Activated CD4-positive, alpha-beta memory T cell treated with anti-CD3 and anti-CD28 coated beads, Interleukin-2, amount 10 ng/mL, durations not matched to agents 7 days and 5 days (primary cell): ENCODE measurements at regions of chr11 and their contacts with region 1.

Region 1: GRCh38 chr11:65927904-65928397 is 8.7 kb downstream of the DRAP1 start:
- DNase-seq: peak; percentile 87
- H3K4me3 Mint-ChIP-seq: peak overlapping the region; percentile 69
- H3K27ac Mint-ChIP-seq: peak overlapping the region; percentile 95
- H3K4me1 Mint-ChIP-seq: peaks cover 48% of the 10 kb centered on the region
- H3K27me3 Mint-ChIP-seq: no peaks in the 10 kb centered on the region

Region 2: DNA sequence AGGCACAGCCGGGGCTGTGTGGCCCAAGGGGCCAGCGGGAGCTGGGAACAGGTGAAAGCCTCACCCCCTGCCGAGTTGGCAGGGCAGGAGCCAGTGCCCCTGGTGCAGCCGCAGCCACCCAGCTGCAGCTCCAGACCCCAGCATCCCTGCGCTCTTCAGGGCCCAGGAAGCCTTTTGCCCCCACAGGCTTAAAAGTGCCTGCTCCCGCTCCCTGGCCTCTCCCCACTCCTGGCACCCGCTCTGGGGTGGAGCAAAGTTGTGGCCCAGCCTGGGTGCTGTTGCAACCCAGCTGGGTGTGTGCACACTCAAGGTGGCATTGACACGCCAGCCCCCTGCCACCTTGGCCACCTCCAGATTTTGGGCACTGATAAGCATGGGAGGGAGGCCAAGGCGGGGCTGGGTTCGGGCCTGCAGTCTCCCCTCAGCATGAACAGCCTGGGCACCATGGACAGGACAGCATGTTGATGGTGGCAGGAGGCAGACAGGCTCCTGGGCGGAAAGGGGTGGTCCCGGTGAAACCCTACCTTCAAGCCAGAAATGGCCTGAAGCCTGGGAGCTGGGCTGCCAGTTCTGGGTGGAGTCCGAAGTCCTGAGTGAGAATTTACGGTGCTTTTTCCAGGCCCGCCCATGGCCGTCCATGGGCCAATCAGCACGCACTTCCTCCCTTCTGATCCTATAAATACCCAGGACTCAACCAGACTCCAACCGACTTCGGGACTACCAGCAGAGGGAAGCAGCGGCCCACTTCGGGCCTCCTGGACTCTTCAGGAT is 183.8 kb before region 1 on chr11:
- CTCF ChIA-PET with region 1: no interaction called
- POLR2A ChIA-PET with region 1: no interaction called
- DNase-seq: no peak
- H3K4me3 Mint-ChIP-seq: no peak overlapping the region
- H3K27ac Mint-ChIP-seq: no peak overlapping the region
- H3K4me1 Mint-ChIP-seq: peaks cover 2% of the 10 kb centered on the region
- H3K27me3 Mint-ChIP-seq: peaks cover 31% of the 10 kb centered on the region

Region 3: GRCh38 chr11:65953513-65953912 is 25.6 kb after region 1 on chr11:
- CTCF ChIA-PET with region 1: no interaction called
- POLR2A ChIA-PET with region 1: interaction called, 14 read pairs
- DNase-seq: no peak
- H3K4me3 Mint-ChIP-seq: no peak overlapping the region
- H3K27ac Mint-ChIP-seq: no peak overlapping the region
- H3K4me1 Mint-ChIP-seq: peaks cover 20% of the 10 kb centered on the region
- H3K27me3 Mint-ChIP-seq: peaks cover 3% of the 10 kb centered on the region

Region 4: GRCh38 chr11:65961232-65961901 is 33.4 kb after region 1 on chr11 and contains the start of gene SART1:
- CTCF ChIA-PET with region 1: no interaction called
- POLR2A ChIA-PET with region 1: interaction called, 18 read pairs
- DNase-seq: peak; percentile 96
- H3K4me3 Mint-ChIP-seq: peak within 1 kb of the TSS; percentile 98
- H3K27ac Mint-ChIP-seq: peak within 1 kb of the TSS; percentile 96
- H3K4me1 Mint-ChIP-seq: peaks cover 52% of the 10 kb centered on the region
- H3K27me3 Mint-ChIP-seq: no peaks in the 10 kb centered on the region
- total RNA-seq, gene SART1: 59.5 to 61.5 TPM

Region 5: GRCh38 chr11:66045177-66045639 is 117.3 kb after region 1 on chr11:
- CTCF ChIA-PET with region 1: no interaction called
- POLR2A ChIA-PET with region 1: no interaction called
- DNase-seq: peak; percentile 84
- H3K4me3 Mint-ChIP-seq: peak overlapping the region; percentile 14
- H3K27ac Mint-ChIP-seq: peak overlapping the region; percentile 13
- H3K4me1 Mint-ChIP-seq: peaks cover 16% of the 10 kb centered on the region
- H3K27me3 Mint-ChIP-seq: peaks cover 4% of the 10 kb centered on the region

Region 6: GRCh38 chr11:66146940-66147339 is 219.0 kb after region 1 on chr11:
- CTCF ChIA-PET with region 1: no interaction called
- POLR2A ChIA-PET with region 1: no interaction called
- DNase-seq: no peak
- H3K4me3 Mint-ChIP-seq: no peak overlapping the region
- H3K27ac Mint-ChIP-seq: no peak overlapping the region
- H3K4me1 Mint-ChIP-seq: peaks cover 16% of the 10 kb centered on the region
- H3K27me3 Mint-ChIP-seq: no peaks in the 10 kb centered on the region

Region 7: GRCh38 chr11:66157179-66157864 is 229.4 kb after region 1 on chr11:
- CTCF ChIA-PET with region 1: no interaction called
- POLR2A ChIA-PET with region 1: no interaction called
- DNase-seq: no peak
- H3K4me3 Mint-ChIP-seq: no peak overlapping the region
- H3K27ac Mint-ChIP-seq: no peak overlapping the region
- H3K4me1 Mint-ChIP-seq: peaks cover 21% of the 10 kb centered on the region
- H3K27me3 Mint-ChIP-seq: no peaks in the 10 kb centered on the region